CD4-positive, alpha-beta T cell (primary cell): ENCODE measurements at regions of chr1 and their contacts with region 1.

Region 1: GRCh38 chr1:206772243-206772937 is at the start of gene IL10:
- DNase-seq: no peak
- ATAC-seq: no peak
- H3K4me3 ChIP-seq: no peak within 1 kb of the TSS
- H3K4me3 Mint-ChIP-seq: peak within 1 kb of the TSS; percentile 36
- H3K27ac ChIP-seq: no peak within 1 kb of the TSS
- H3K27ac Mint-ChIP-seq: peak within 1 kb of the TSS; percentile 69
- H3K4me1 ChIP-seq: peaks cover 66% of the 10 kb centered on the region
- H3K4me1 Mint-ChIP-seq: peaks cover 56% of the 10 kb centered on the region
- H3K27me3 ChIP-seq: no peaks in the 10 kb centered on the region
- H3K27me3 Mint-ChIP-seq: no peaks in the 10 kb centered on the region
- CTCF ChIP-seq: no peak
- total RNA-seq, gene IL10: 0.27 to 0.87 TPM

Region 2: DNA sequence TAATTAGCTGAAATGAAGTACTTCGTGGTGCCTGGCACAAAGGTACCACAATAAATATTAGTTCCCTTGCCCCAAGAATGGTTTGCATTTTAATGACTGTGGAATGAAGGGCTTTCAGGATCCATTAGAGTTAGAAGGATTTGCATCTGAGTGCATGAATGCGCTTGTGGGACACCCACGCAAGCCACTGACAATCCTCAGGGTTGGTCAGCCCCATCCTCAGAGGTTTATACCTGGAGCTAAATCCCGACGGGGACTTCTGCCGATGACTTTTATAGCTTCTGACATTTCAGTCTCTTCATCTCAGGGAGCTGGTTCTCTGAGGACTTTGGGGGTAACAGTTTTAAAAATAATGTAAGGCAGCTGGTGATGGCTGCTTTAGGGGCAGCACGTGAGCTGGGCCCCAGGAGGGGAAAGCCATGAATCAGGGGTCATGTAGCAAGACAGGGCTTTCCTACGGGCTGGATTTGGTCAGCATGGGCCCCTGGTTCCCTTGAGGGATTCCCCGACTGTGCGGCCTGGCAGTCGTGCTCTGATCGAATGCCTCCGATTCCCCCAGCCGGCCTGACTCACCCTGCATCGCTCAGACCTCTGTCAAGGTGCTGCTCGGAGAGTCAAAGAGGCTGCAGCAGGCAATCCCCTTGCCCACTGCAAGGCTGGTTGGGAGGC is 20.7 kb after region 1 on chr1:
- CTCF ChIA-PET with region 1: interaction called, 5 read pairs
- POLR2A ChIA-PET with region 1: interaction called, 7 read pairs
- intact Hi-C with region 1: loop called in 1 of 2 experiments (anchors 2 kb)
- DNase-seq: peak in 1 of 14 experiments; percentile 48
- ATAC-seq: no peak
- H3K4me3 ChIP-seq: no peak overlapping the region
- H3K4me3 Mint-ChIP-seq: no peak overlapping the region
- H3K27ac ChIP-seq: no peak overlapping the region
- H3K27ac Mint-ChIP-seq: no peak overlapping the region
- H3K4me1 ChIP-seq: peaks cover 54% of the 10 kb centered on the region
- H3K4me1 Mint-ChIP-seq: peaks cover 56% of the 10 kb centered on the region
- H3K27me3 ChIP-seq: no peaks in the 10 kb centered on the region
- H3K27me3 Mint-ChIP-seq: no peaks in the 10 kb centered on the region
- CTCF ChIP-seq: no peak

Region 3: GRCh38 chr1:206826405-206826804 is 54.0 kb after region 1 on chr1:
- CTCF ChIA-PET with region 1: no interaction called
- POLR2A ChIA-PET with region 1: no interaction called
- intact Hi-C with region 1: no loop called
- DNase-seq: no peak
- ATAC-seq: no peak
- H3K4me3 ChIP-seq: no peak overlapping the region
- H3K4me3 Mint-ChIP-seq: no peak overlapping the region
- H3K27ac ChIP-seq: no peak overlapping the region
- H3K27ac Mint-ChIP-seq: no peak overlapping the region
- H3K4me1 ChIP-seq: peaks cover 25% of the 10 kb centered on the region
- H3K4me1 Mint-ChIP-seq: peaks cover 41% of the 10 kb centered on the region
- H3K27me3 ChIP-seq: no peaks in the 10 kb centered on the region
- H3K27me3 Mint-ChIP-seq: no peaks in the 10 kb centered on the region
- CTCF ChIP-seq: no peak